K562 (cell line): ENCODE measurements at regions of chr1 and their contacts with region 1.

Region 1: GRCh38 chr1:159924981-159925712 is at the start of gene TAGLN2:
- DNase-seq: peak; percentile 86 to 95 (median 91)
- ATAC-seq: peak; percentile 83
- H3K4me3 ChIP-seq: peak within 1 kb of the TSS; percentile 72
- H3K27ac ChIP-seq: peak within 1 kb of the TSS; percentile 100
- H3K4me1 ChIP-seq: peaks cover 28 to 77% of the 10 kb centered on the region in 2 experiments
- H3K27me3 ChIP-seq: no peaks in the 10 kb centered on the region
- CTCF ChIP-seq: no peak
- EP300 ChIP-seq: no peak
- POLR2A ChIP-seq: peak; percentile 98
- RAD21 ChIP-seq: no peak
- polyA plus RNA-seq, gene TAGLN2: 334 to 683 TPM

Region 2: DNA sequence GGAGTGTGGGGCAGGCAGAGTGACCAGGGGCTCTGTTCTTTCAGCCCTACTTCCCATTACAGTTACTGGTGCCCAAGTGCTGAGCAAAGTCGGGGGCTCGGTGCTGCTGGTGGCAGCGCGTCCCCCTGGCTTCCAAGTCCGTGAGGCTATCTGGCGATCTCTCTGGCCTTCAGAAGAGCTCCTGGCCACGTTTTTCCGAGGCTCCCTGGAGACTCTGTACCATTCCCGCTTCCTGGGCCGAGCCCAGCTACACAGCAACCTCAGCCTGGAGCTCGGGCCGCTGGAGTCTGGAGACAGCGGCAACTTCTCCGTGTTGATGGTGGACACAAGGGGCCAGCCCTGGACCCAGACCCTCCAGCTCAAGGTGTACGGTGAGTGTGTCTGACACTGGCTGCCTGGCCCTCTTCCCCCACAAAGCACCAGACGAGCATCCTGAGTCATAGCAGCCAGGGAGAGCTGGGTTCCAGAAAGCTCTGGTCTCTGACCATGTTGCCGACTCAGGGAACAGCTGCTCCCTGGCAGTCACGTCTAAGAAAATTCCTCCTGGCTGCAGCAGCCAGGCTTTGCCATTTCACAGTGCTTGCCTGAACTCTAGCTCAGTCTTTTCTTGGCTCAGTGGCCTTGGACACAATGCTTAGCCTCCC is 95.2 kb before region 1 on chr1:
- CTCF ChIA-PET with region 1: no interaction called
- POLR2A ChIA-PET with region 1: interaction called, 3 read pairs
- in situ Hi-C with region 1: no loop called
- intact Hi-C with region 1: loop called (anchors 10 kb)
- DNase-seq: no peak
- ATAC-seq: no peak
- H3K4me3 ChIP-seq: no peak overlapping the region
- H3K27ac ChIP-seq: no peak overlapping the region
- H3K4me1 ChIP-seq: peaks cover 0 to 5% of the 10 kb centered on the region in 2 experiments; a peak in 2 of 5 replicates
- H3K27me3 ChIP-seq: peaks cover 23 to 75% of the 10 kb centered on the region in 2 experiments; a peak in 4 of 5 replicates
- CTCF ChIP-seq: no peak
- EP300 ChIP-seq: no peak
- POLR2A ChIP-seq: no peak
- RAD21 ChIP-seq: no peak

Region 3: DNA sequence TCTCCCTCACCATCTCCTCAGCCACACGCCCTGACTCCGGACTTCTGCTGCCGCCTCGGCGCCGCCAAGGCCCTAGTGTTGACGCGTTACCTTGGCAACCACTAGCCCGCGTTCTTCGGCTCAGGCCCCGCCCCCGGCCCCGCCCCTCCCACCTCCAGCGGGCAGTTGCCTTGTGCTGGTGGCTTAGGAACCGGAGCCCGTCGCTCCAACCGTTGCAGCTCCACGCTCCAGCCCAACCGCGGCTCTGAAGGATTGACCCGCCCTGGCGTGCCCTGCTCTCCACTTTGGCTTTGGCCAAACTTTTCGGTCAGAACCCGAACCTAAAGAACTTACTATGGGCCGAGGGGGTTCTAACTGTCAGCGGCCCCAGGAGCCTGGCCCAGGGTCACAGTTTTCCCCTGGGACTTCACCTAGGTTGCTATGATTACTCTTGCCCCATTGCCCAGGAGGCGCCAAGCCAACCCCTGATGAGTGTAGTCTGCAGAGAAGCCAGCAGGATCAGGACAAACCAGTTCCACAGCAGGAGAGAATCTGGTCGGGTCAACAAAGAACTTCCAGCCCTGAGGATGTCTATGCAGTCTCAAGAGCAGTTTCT is 25.0 kb before region 1 on chr1 and contains the start of gene CFAP45:
- CTCF ChIA-PET with region 1: no interaction called
- POLR2A ChIA-PET with region 1: interaction called, 6 read pairs
- in situ Hi-C with region 1: no loop called
- intact Hi-C with region 1: loop called (anchors 1 kb)
- DNase-seq: peak; percentile 93 to 98 (median 96)
- ATAC-seq: peak; percentile 98
- H3K4me3 ChIP-seq: 0 out of 2 replicates have a peak within 1 kb of the TSS, but pooled peaks have one; percentile 11
- H3K27ac ChIP-seq: peak within 1 kb of the TSS; percentile 60; the same call in 1 of the 3 replicates
- H3K4me1 ChIP-seq: peaks cover 18 to 30% of the 10 kb centered on the region in 2 experiments
- H3K27me3 ChIP-seq: no peaks in the 10 kb centered on the region
- CTCF ChIP-seq: no peak
- EP300 ChIP-seq: no peak
- POLR2A ChIP-seq: no peak
- RAD21 ChIP-seq: no peak
- polyA plus RNA-seq, gene CFAP45: 0.65 to 1.3 TPM

Region 4: GRCh38 chr1:160093624-160094290 is 168.6 kb after region 1 on chr1:
- CTCF ChIA-PET with region 1: no interaction called
- POLR2A ChIA-PET with region 1: no interaction called
- in situ Hi-C with region 1: no loop called
- intact Hi-C with region 1: no loop called
- DNase-seq: no peak
- ATAC-seq: no peak
- H3K4me3 ChIP-seq: no peak overlapping the region
- H3K27ac ChIP-seq: no peak overlapping the region
- H3K4me1 ChIP-seq: peaks cover 0 to 33% of the 10 kb centered on the region in 2 experiments; a peak in 3 of 5 replicates
- H3K27me3 ChIP-seq: no peaks in the 10 kb centered on the region
- CTCF ChIP-seq: no peak
- EP300 ChIP-seq: no peak
- POLR2A ChIP-seq: no peak
- RAD21 ChIP-seq: no peak